Dendritic cell treated with granulocyte-macrophage colony-stimulating factor and Interleukin-4, amounts not matched to agents 40 ng/mL and 50 ng/mL, for 4 days (primary cell): ENCODE measurements at regions of chr12 and their contacts with region 1.

Region 1: GRCh38 chr12:22981711-22982110 is 356.7 kb downstream of the ETNK1 start:
- H3K4me3 Mint-ChIP-seq: no peak overlapping the region
- H3K27ac Mint-ChIP-seq: no peak overlapping the region
- H3K4me1 Mint-ChIP-seq: no peaks in the 10 kb centered on the region
- H3K27me3 Mint-ChIP-seq: no peaks in the 10 kb centered on the region

Region 2: GRCh38 chr12:23002381-23002780 is 20.7 kb after region 1 on chr12:
- intact Hi-C with region 1: loop called (anchors 1 kb)
- H3K4me3 Mint-ChIP-seq: no peak overlapping the region
- H3K27ac Mint-ChIP-seq: no peak overlapping the region
- H3K4me1 Mint-ChIP-seq: no peaks in the 10 kb centered on the region
- H3K27me3 Mint-ChIP-seq: no peaks in the 10 kb centered on the region